HEK293T (cell line): ENCODE measurements at regions of chr4 and their contacts with region 1.

Region 1: GRCh38 chr4:173257732-173258717 is 76.1 kb downstream of the HMGB2 start:
- DNase-seq: peak; percentile 66

Region 2: DNA sequence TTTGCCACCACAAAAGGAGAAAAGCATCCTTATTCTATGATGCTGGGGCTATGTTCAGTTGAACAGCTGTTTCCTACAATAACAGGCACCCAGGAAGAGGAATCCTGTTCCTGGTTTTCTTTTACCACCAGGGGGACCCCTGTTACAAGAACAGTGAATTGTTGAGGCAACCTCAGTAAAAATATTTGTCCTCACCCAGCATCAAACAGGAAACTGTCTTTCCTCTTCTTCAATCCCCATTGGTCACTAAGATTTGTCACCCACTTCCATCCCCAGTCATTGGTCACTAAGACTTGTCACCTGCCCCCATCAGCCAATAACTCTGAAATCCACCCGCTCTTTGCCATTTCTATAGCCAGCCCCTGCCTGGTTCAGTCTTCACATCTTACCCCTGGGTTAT is 232.9 kb before region 1 on chr4:
- CTCF ChIA-PET with region 1: interaction called, 35 read pairs
- POLR2A ChIA-PET with region 1: no interaction called
- DNase-seq: peak; percentile 59

Region 3: GRCh38 chr4:173174594-173175012 is 83.4 kb before region 1 on chr4:
- CTCF ChIA-PET with region 1: interaction called, 10 read pairs
- POLR2A ChIA-PET with region 1: no interaction called
- DNase-seq: no peak